ENCODE measurements at regions of chr1 and their contacts with region 1.

Region 1: GRCh38 chr1:94237291-94238226 is at the start of gene ARHGAP29:
- DNase-seq: peak; percentile 90 to 93 (median 91)
- ATAC-seq: peak; percentile 83 to 98 (median 94)
- H3K4me3 ChIP-seq: peak within 1 kb of the TSS; percentile 76 to 97 (median 86)
- H3K27ac ChIP-seq: peak within 1 kb of the TSS; percentile 91 to 99 (median 96)
- H3K4me1 ChIP-seq: peaks cover 0 to 32% (median 18%) of the 10 kb centered on the region in 12 donors
- H3K27me3 ChIP-seq: peaks cover 0 to 49% (median 0%) of the 10 kb centered on the region in 9 donors
- CTCF ChIP-seq: peak in 1 of 12 donors; percentile 15
- POLR2A ChIP-seq: peak in 1 of 2 donors; percentile 96
- total RNA-seq, gene ARHGAP29: 21.9 to 35.7 (median 29.7) TPM

Region 2: GRCh38 chr1:94045465-94046056 is 192.0 kb before region 1 on chr1:
- intact Hi-C with region 1: loop called in 6 of 10 experiments (anchors 2 to 5 kb)
- DNase-seq: peak; percentile 91 to 95 (median 91)
- ATAC-seq: peak; percentile 89 to 94 (median 91)
- H3K4me3 ChIP-seq: peak overlapping the region in 7 of 12 donors; percentile 12 to 34 (median 20)
- H3K27ac ChIP-seq: peak overlapping the region; percentile 77 to 97 (median 91)
- H3K4me1 ChIP-seq: peaks cover 11 to 81% (median 49%) of the 10 kb centered on the region in 12 donors
- H3K27me3 ChIP-seq: no peaks in the 10 kb centered on the region
- CTCF ChIP-seq: peak; percentile 50 to 94 (median 78)
- POLR2A ChIP-seq: peak in 1 of 2 donors; percentile 16

Region 3: DNA sequence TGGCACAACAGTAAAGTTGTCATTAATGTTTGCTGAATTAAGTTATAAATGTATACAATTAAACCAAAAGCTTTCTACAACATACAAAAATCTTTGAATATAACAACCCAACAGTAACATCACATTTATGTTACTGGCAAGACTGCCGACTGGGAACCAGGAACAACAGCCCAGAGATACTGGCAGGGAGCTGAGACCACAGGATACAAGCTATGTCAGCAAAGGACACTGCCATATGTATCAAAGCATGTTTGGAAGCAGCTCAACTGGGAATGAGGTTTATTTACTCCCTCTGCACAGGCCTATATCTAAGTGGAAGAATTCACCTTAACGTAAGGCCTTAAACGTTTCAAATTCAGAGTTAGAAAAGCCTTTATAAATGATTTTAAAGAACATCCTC is 50.6 kb before region 1 on chr1:
- intact Hi-C with region 1: loop called in 2 of 10 experiments (anchors 5 kb)
- DNase-seq: no peak
- ATAC-seq: peak in 2 of 4 donors; percentile 46 to 55
- H3K4me3 ChIP-seq: no peak overlapping the region
- H3K27ac ChIP-seq: no peak overlapping the region
- H3K4me1 ChIP-seq: peaks cover 0 to 41% (median 28%) of the 10 kb centered on the region in 12 donors
- H3K27me3 ChIP-seq: no peaks in the 10 kb centered on the region
- CTCF ChIP-seq: no peak
- POLR2A ChIP-seq: no peak

Region 4: GRCh38 chr1:94202241-94202640 is 35.3 kb before region 1 on chr1:
- intact Hi-C with region 1: loop called in 3 of 10 experiments (anchors 5 kb)
- DNase-seq: no peak
- ATAC-seq: no peak
- H3K4me3 ChIP-seq: no peak overlapping the region
- H3K27ac ChIP-seq: no peak overlapping the region
- H3K4me1 ChIP-seq: peaks cover 0 to 16% (median 3%) of the 10 kb centered on the region in 12 donors
- H3K27me3 ChIP-seq: no peaks in the 10 kb centered on the region
- CTCF ChIP-seq: no peak
- POLR2A ChIP-seq: no peak

Region 5: GRCh38 chr1:94329986-94330385 is 92.4 kb after region 1 on chr1:
- intact Hi-C with region 1: loop called in 5 of 10 experiments (anchors 5 kb)
- DNase-seq: peak in 1 of 5 donors; percentile 22
- ATAC-seq: peak in 3 of 4 donors; percentile 6 to 46 (median 40)
- H3K4me3 ChIP-seq: peak overlapping the region in 5 of 12 donors; percentile 5 to 28 (median 13)
- H3K27ac ChIP-seq: peak overlapping the region in 10 of 12 donors; percentile 38 to 79 (median 76)
- H3K4me1 ChIP-seq: peaks cover 6 to 72% (median 52%) of the 10 kb centered on the region in 12 donors
- H3K27me3 ChIP-seq: peaks cover 0 to 18% (median 0%) of the 10 kb centered on the region in 9 donors
- CTCF ChIP-seq: peak in 11 of 12 donors; percentile 23 to 70 (median 54)
- POLR2A ChIP-seq: no peak

Region 6: DNA sequence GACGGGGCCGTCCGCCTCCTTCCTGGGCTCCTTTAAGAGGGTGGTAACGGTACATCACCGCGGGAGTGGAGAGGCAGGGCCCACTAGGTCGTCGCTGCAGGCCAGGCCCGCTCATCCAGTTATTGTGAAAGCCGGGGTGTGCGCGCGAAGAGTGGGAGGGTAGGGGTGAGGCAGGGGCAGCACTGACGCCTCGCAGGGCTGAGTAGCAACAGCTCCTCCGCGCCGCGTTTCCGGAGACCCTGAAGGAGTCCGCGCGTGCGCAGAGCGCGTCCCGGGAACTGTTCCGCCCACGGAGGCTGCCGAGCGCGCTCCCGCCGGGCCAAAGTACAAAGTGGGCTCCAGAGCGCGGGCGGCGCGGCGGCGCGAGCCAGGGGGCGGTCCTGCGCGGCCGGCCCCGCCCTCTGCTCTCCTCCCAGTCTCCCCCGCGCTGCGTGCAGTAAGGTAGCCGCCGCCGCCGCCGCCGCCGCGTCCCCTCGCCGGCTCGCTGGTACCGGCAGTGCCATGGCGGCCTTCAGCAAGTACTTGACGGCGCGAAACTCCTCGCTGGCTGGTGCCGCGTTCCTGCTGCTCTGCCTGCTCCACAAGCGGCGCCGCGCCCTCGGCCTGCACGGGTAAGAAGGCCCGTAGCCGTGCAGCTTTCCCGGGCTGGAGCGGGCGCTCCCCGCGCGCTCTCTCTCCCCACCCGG is 180.6 kb after region 1 on chr1 and contains the start of gene ABCD3:
- intact Hi-C with region 1: loop called in 1 of 10 experiments (anchors 10 kb)
- DNase-seq: peak; percentile 98 to 99 (median 99)
- ATAC-seq: peak; percentile 92 to 98 (median 96)
- H3K4me3 ChIP-seq: peak within 1 kb of the TSS; percentile 63 to 99 (median 86)
- H3K27ac ChIP-seq: peak within 1 kb of the TSS; percentile 81 to 97 (median 94)
- H3K4me1 ChIP-seq: peaks cover 0 to 49% (median 30%) of the 10 kb centered on the region in 12 donors
- H3K27me3 ChIP-seq: no peaks in the 10 kb centered on the region
- CTCF ChIP-seq: no peak
- POLR2A ChIP-seq: peak in 1 of 2 donors; percentile 94
- total RNA-seq, gene ABCD3: 29.3 to 94.2 (median 62.1) TPM

Measured in heart left ventricle (tissue), 16 donors.